Activated CD4-positive, alpha-beta memory T cell treated with anti-CD3 and anti-CD28 coated beads for 36 hours (primary cell): ENCODE measurements at regions of chr12 and their contacts with region 1.

Region 1: DNA sequence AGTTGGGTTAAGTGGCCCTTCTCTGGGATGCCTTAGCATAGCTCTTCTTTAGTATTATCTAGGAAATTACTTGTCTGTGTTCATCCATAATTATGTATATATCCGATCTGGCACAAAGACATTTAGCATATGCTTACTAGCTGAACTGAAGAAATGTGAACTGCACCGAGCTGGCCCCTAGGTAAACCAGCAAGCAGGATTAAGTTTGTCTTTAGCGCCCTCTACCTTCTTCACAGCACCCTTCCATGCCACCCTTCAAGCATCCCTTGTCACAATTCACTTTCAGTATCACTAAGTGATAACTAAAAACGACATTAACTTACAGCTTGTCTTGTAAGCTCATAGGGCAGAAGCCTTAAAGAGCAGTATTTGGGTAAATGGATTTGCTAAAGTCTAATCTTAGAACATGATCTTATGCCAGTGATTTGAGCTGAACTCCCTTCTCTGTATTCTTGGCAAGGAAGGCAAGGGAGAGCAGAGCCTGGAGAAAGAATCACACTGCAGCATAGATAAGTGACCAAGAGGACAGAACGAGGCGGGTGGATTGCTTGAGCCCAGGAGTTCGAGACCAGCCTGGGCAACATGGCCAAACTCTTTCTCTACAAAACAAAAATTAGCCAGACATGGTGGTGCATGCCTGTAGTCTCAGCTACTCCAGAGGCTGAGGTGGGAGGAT is 2.6 kb upstream of the HAL start:
- DNase-seq: peak; percentile 65
- H3K4me3 Mint-ChIP-seq: no peak overlapping the region
- H3K27ac Mint-ChIP-seq: no peak overlapping the region
- H3K4me1 Mint-ChIP-seq: peaks cover 9% of the 10 kb centered on the region
- H3K27me3 Mint-ChIP-seq: no peaks in the 10 kb centered on the region

Region 2: DNA sequence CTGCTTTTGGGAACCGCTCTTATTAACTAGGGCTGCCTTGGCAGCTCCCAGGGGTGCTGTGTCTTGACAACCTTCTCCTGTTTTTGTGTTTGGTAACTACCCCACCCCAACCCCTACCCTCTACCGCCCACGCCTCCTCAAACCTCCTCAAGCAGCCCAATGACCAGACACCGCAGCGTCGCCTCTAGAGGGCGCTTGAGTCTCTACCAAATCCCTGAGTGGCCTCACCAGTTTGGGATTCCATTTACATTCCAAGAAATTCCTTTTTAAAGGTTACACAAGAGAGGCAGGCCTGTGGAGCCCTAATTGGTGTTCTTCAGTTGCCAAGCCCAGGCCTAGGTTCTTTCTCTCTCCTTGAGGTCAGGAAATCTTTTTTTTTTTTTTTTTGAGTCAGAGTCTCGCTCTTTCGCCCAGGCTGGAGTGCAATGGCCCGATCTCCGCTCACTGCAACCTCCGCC is 375.1 kb before region 1 on chr12:
- CTCF ChIA-PET with region 1: no interaction called
- POLR2A ChIA-PET with region 1: no interaction called
- intact Hi-C with region 1: loop called (anchors 10 kb)
- DNase-seq: peak; percentile 43
- H3K4me3 Mint-ChIP-seq: no peak overlapping the region
- H3K27ac Mint-ChIP-seq: no peak overlapping the region
- H3K4me1 Mint-ChIP-seq: no peaks in the 10 kb centered on the region
- H3K27me3 Mint-ChIP-seq: peaks cover 8% of the 10 kb centered on the region

Region 3: GRCh38 chr12:95858479-95859343 is 140.0 kb before region 1 on chr12 and contains the start of gene SNRPF:
- CTCF ChIA-PET with region 1: interaction called, 3 read pairs
- POLR2A ChIA-PET with region 1: no interaction called
- intact Hi-C with region 1: loop called (anchors 5 kb)
- DNase-seq: peak; percentile 97
- H3K4me3 Mint-ChIP-seq: no peak within 1 kb of the TSS
- H3K27ac Mint-ChIP-seq: no peak within 1 kb of the TSS
- H3K4me1 Mint-ChIP-seq: peaks cover 38% of the 10 kb centered on the region
- H3K27me3 Mint-ChIP-seq: peaks cover 5% of the 10 kb centered on the region
- total RNA-seq, gene SNRPF: 45.4 to 46.0 TPM

Region 4: GRCh38 chr12:95942524-95943329 is 56.0 kb before region 1 on chr12 and contains the start of gene CCDC38:
- CTCF ChIA-PET with region 1: interaction called, 7 read pairs
- POLR2A ChIA-PET with region 1: interaction called, 7 read pairs
- intact Hi-C with region 1: loop called (anchors 1 kb)
- DNase-seq: peak; percentile 90
- H3K4me3 Mint-ChIP-seq: peak within 1 kb of the TSS; percentile 83
- H3K27ac Mint-ChIP-seq: peak within 1 kb of the TSS; percentile 86
- H3K4me1 Mint-ChIP-seq: peaks cover 10% of the 10 kb centered on the region
- H3K27me3 Mint-ChIP-seq: no peaks in the 10 kb centered on the region
- total RNA-seq, gene CCDC38: 0.24 TPM in 1 of 2 experiments, not detected in the other

Region 5: GRCh38 chr12:96094201-96094600 is 95.5 kb after region 1 on chr12:
- CTCF ChIA-PET with region 1: no interaction called
- POLR2A ChIA-PET with region 1: no interaction called
- intact Hi-C with region 1: no loop called
- DNase-seq: no peak
- H3K4me3 Mint-ChIP-seq: no peak overlapping the region
- H3K27ac Mint-ChIP-seq: no peak overlapping the region
- H3K4me1 Mint-ChIP-seq: peaks cover 13% of the 10 kb centered on the region
- H3K27me3 Mint-ChIP-seq: no peaks in the 10 kb centered on the region

Region 6: GRCh38 chr12:96177013-96177412 is 178.3 kb after region 1 on chr12:
- CTCF ChIA-PET with region 1: no interaction called
- POLR2A ChIA-PET with region 1: no interaction called
- intact Hi-C with region 1: no loop called
- DNase-seq: peak; percentile 90
- H3K4me3 Mint-ChIP-seq: peak overlapping the region; percentile 10
- H3K27ac Mint-ChIP-seq: peak overlapping the region; percentile 83
- H3K4me1 Mint-ChIP-seq: peaks cover 24% of the 10 kb centered on the region
- H3K27me3 Mint-ChIP-seq: no peaks in the 10 kb centered on the region

Region 7: GRCh38 chr12:96219698-96220206 is 221.0 kb after region 1 on chr12:
- CTCF ChIA-PET with region 1: interaction called, 10 read pairs
- POLR2A ChIA-PET with region 1: no interaction called
- intact Hi-C with region 1: no loop called
- DNase-seq: peak; percentile 36
- H3K4me3 Mint-ChIP-seq: no peak overlapping the region
- H3K27ac Mint-ChIP-seq: peak overlapping the region; percentile 14
- H3K4me1 Mint-ChIP-seq: peaks cover 53% of the 10 kb centered on the region
- H3K27me3 Mint-ChIP-seq: no peaks in the 10 kb centered on the region